Right cardiac atrium (tissue), 5 donors: ENCODE measurements at regions of chr2 and their contacts with region 1.

Region 1: GRCh38 chr2:108583903-108584520 is 49.7 kb downstream of the LIMS1 start:
- DNase-seq: peak in 2 of 3 donors; percentile 38 to 47
- ATAC-seq: peak; percentile 70 to 73
- H3K4me3 ChIP-seq: no peak overlapping the region
- H3K27ac ChIP-seq: no peak overlapping the region
- H3K4me1 ChIP-seq: peaks cover 14% of the 10 kb centered on the region
- H3K27me3 ChIP-seq: no peaks in the 10 kb centered on the region

Region 2: DNA sequence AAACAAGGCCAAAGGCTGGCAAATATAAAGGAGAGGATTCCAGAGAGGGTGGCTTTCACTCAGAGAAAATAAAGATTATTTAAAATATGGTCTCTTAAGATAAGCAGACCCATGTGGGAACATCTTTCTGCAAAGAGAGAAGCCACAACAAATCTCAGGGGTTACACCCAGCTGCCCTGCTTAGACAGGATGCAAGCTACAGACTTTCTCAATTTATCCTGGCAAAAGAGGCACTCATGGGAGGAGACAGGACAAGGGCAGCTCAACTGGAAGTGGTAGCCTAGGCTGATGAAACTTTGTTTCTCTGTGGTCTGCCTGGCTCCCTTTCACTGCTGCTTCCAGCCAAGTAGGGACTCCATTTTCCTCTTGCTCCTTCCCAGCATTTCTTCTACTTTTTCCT is 232.1 kb before region 1 on chr2:
- intact Hi-C with region 1: loop called in 3 of 4 experiments (anchors 5 to 10 kb)
- DNase-seq: no peak
- ATAC-seq: peak in 1 of 2 donors; percentile 88
- H3K4me3 ChIP-seq: no peak overlapping the region
- H3K27ac ChIP-seq: no peak overlapping the region
- H3K4me1 ChIP-seq: no peaks in the 10 kb centered on the region
- H3K27me3 ChIP-seq: no peaks in the 10 kb centered on the region

Region 3: GRCh38 chr2:108377815-108378630 is 206.0 kb before region 1 on chr2 and contains the start of gene SULT1C4:
- intact Hi-C with region 1: loop called in 1 of 4 experiments (anchors 10 kb)
- DNase-seq: peak; percentile 70 to 89 (median 86)
- ATAC-seq: peak; percentile 89 to 93
- H3K4me3 ChIP-seq: peak within 1 kb of the TSS; percentile 68
- H3K27ac ChIP-seq: peak within 1 kb of the TSS; percentile 46
- H3K4me1 ChIP-seq: no peaks in the 10 kb centered on the region
- H3K27me3 ChIP-seq: no peaks in the 10 kb centered on the region
- total RNA-seq, gene SULT1C4: 7.1 to 23.6 (median 13.9) TPM

Region 4: DNA sequence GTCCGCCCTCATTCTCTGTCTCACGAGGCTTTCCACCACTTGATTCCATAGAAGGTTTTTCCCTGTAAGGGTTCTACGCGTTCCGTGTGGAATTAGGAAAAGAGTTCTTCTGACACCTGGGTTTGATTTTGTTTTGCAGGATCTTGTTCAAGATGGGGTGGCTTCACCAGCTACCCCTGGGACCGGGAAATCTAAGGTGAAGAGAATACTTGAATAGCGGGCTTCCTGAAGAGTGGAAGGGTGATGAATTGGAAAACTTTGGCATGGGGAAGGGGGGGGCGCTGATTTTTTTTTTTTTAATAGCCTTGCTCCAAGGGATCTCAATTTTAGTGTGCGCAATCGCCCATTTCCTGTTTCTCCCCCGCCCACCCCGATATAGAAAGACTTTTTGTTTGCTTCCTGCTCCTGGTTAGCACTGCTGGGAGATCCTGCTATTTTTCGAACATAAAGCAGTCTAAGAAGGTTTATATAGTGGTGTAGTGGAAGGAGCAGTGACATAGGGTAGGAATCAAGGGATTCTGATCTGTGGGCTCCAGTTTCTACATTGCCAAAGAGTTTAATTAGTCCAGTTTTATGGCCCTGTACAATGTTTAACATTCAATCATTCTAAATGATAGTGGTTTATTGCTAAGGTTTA is 134.4 kb before region 1 on chr2:
- intact Hi-C with region 1: loop called in 1 of 4 experiments (anchors 10 kb)
- DNase-seq: no peak
- ATAC-seq: peak in 1 of 2 donors; percentile 40
- H3K4me3 ChIP-seq: peak overlapping the region; percentile 73
- H3K27ac ChIP-seq: peak overlapping the region; percentile 10
- H3K4me1 ChIP-seq: no peaks in the 10 kb centered on the region
- H3K27me3 ChIP-seq: no peaks in the 10 kb centered on the region

Region 5: DNA sequence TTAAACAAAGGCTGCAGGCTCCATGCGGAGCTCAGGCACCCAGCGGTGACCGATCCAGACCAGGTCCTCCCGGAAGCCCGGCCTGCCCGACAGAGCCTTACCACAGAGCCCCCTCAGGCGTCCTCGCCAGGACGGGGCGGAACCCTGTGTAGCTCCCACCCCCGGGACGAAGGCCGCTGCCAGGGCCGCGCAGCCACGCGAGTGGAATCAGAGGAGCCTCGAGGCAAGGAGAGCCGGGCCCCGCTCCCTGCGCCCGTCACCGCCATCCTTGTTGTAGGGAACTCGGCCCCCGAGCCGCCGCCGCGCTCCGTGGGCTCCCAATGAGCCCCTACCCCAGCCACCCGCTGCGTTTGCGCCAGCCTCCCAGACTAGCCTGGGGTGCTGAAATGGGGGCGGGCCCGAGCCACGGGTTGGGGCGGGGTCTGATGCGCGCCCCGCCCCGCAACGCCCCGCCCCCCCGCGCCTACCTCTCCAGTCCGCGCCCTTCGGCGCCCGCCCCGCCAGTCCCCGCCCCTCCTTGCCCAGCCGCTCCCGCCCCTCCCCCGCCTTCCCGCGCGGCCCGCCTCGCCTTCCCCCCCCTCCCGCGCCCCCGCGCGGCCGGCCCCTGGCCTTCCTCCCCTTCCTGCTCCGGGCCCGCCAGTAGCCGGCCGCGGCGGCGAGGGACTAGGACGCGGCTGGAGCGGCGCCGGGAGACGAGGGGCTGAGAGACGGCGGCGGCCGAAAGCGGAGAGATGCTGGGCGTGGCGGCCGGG is 50.0 kb before region 1 on chr2 and contains the start of gene LIMS1:
- intact Hi-C with region 1: loop called in 3 of 4 experiments (anchors 5 to 10 kb)
- DNase-seq: peak; percentile 93 to 97 (median 97)
- ATAC-seq: peak; percentile 97 to 98
- H3K4me3 ChIP-seq: peak within 1 kb of the TSS; percentile 99
- H3K27ac ChIP-seq: peak within 1 kb of the TSS; percentile 90
- H3K4me1 ChIP-seq: peaks cover 3% of the 10 kb centered on the region
- H3K27me3 ChIP-seq: no peaks in the 10 kb centered on the region
- total RNA-seq, gene LIMS1: 45.5 to 65.6 (median 55.9) TPM